Activated T-helper 1 cell treated with anti-CD3 and anti-CD28 coated beads, Interleukin-12 subunit alpha, Interleukin-12 subunit beta, Interleukin-2, Interleukin-4 antibody, amounts not matched to agents 30 ng/mL and 10 ng/mL and 1 ng/mL, durations not matched to agents 14 hours and 24 hours and 36 hours (primary cell): ENCODE measurements at regions of chr16 and their contacts with region 1.

Region 1: DNA sequence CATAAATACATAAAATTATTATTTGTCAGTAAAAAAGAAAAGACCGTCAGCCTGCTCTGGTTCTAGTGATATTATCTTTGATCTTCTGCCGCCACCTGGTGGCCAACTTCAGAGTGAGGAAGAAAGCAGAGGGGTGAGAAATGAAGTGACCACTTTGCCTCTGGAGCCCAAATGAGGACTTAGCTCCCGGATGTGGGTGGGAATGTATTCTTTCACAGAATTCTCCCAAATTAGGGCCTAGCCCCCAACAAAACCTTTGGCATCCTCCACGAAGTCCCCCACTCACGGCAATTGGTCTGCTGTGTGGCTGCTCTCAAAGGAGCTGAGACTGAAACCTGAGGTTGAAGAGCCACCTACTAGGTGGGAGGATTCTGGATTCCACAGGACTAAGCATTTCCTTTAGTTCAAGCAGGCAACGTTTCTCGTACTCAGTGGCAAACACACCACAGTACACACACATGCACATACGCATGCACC is 4.9 kb upstream of the ZNF267 start:
- DNase-seq: peak; percentile 74
- H3K4me3 Mint-ChIP-seq: peak overlapping the region; percentile 72
- H3K27ac Mint-ChIP-seq: peak overlapping the region; percentile 93
- H3K4me1 Mint-ChIP-seq: peaks cover 77% of the 10 kb centered on the region
- H3K27me3 Mint-ChIP-seq: peaks cover 3% of the 10 kb centered on the region

Region 2: DNA sequence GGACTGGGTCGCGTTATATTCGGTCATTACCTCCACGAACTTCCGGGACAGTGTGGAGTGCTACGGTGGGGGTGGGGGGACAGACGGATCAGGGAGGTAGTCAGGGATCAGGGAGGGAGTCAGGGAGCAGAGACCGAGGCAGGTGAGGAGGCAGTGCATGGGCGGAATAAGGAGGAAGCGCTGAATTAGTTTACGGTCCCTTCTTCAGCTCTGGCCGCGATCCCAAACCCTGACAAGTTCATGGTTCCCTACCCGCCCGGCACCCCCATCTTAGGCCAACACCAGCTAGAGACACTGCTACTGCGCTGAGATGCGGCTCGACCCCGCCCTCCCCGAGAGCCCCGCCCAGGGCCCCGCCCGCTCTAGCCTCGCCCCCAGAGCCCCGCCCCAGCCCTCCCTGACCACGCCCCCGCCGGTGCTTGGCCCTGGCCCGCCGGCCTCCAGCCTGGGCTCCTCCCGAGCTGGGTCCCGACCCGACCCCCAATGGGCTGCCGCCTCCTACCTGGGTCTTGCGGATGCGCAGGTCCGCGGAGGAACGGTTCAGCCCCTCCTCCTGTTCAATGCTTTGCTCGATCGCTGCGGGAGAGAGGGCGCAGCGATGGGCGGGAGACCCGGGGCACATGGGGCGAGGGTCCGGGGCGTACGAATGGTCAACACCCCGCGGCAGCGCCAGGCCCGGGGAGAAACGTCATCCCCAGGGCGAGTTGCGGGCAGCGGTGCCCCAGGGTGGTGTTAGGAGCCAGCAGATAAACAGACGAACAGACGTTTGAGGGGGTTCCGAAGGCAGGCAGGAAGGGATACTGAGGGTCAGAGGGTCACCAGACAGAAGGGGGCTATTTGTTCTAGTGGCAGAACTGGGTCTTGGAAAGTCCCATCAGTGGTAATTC is 871.5 kb before region 1 on chr16:
- intact Hi-C with region 1: loop called (anchors 2 kb)
- DNase-seq: peak; percentile 66
- H3K4me3 Mint-ChIP-seq: peak overlapping the region; percentile 74
- H3K27ac Mint-ChIP-seq: peak overlapping the region; percentile 44
- H3K4me1 Mint-ChIP-seq: peaks cover 11% of the 10 kb centered on the region
- H3K27me3 Mint-ChIP-seq: peaks cover 18% of the 10 kb centered on the region

Region 3: DNA sequence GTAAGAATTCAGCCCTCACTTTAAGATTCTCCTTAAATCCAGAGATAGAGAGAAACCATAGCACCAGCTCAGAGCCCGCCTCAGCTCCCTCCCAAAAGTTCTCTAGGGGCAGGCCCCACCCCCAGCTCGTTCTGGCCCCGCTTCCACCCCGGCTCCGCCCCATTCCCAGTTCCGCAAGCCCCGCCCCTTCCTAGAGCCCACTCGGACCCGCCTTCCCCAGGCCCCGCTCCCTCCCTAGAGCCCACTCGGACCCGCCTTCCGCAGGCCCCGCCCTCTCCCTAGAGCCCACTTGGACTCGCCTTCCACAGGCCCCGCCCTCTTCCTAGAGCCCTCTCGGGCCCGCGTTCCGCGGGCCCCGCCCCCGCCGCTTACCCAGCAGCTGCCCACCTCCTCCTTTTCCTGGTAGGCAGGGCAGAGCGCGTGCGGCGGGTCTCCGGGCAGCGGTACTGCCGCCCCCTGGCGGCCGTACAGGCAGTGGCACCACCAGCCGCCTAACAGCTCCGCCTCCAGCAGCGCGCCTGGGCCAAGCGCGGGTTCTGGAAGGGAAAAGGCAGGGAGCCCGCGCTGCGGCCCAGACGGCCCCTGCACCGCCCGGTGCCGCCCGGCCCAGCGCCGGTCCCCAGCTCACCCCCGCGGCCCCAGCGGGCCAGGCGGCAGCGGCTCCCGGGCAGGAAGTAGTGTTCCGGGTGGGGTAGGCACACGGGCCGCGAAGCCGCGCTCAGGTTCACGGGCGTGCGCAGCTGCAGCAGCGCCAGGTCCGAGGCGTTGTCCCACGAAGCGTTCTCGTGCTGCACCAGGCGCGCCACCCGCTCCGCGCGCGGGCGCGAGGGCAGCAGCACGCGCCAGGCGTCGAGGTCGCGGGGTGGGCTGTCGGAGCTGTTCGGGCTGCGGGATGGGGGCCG is 726.4 kb before region 1 on chr16:
- intact Hi-C with region 1: loop called (anchors 1 kb)
- DNase-seq: peak; percentile 98
- H3K4me3 Mint-ChIP-seq: peak overlapping the region; percentile 78
- H3K27ac Mint-ChIP-seq: peak overlapping the region; percentile 88
- H3K4me1 Mint-ChIP-seq: peaks cover 12% of the 10 kb centered on the region
- H3K27me3 Mint-ChIP-seq: peaks cover 13% of the 10 kb centered on the region

Region 4: DNA sequence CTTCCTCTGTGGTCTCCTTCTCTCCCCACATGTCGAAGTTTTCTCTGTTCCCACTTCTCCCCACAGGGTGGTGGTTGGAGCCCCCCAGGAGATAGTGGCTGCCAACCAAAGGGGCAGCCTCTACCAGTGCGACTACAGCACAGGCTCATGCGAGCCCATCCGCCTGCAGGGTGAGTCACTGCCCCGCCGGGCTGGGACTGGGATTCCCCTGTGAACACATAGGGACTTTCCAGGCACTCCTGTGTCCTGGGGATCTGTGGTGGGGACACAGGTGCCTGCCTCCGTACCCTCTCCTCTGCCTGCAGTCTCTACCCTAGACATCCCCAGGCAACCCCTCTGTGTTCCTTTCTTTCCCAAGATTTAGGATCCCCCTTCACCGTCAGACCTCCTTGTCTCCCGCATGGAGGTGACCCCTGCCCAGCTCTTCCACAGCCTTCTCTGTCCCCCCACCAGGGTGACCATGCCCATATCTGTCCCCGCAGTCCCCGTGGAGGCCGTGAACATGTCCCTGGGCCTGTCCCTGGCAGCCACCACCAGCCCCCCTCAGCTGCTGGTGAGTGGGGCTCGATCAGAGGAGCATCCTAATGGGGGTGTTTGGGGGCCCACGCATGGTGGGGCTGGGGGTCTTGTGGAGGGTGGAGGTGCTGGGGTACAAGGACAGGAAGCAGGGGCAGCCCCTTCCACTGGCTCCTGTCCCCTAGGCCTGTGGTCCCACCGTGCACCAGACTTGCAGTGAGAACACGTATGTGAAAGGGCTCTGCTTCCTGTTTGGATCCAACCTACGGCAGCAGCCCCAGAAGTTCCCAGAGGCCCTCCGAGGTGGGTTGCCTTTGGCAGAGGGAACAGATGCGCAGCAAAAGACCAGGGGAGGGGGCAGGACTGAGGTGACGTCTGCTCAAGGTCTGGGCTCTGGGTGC is 603.1 kb before region 1 on chr16:
- intact Hi-C with region 1: loop called (anchors 2 kb)
- DNase-seq: peak; percentile 78
- H3K4me3 Mint-ChIP-seq: peak overlapping the region; percentile 80
- H3K27ac Mint-ChIP-seq: peak overlapping the region; percentile 95
- H3K4me1 Mint-ChIP-seq: peaks cover 71% of the 10 kb centered on the region
- H3K27me3 Mint-ChIP-seq: no peaks in the 10 kb centered on the region

Region 5: DNA sequence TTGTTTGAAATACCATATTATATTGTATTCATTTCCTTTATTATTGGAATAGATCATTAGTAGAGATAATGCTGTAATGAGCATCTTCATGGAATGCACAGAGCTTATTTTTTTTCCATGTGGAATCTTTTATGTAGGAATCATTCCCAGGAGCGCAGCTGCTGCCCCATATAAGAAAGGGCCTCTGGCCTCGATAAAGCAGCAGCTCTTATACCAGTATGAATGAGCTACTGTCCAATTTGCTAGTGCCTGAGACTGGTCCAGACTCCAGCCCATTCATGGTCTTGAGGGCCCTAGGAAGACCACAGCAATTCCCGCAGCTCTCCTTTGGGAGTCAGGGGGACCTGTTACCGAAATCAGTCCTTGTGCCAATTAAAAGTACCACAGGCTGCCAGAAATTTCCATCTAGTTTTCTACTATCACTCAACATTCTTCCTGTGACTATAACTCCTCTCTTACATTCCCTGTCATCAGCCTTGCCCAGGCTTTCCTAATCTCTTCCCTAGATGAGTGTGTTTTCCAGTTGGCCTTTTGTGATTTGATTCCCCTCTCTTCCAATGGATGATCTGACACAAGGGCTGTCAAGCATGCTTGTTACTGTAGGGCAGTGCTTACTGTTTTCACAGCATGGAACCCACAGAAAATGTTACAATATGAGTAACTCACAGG is 428.1 kb before region 1 on chr16:
- intact Hi-C with region 1: loop called (anchors 5 kb)
- DNase-seq: no peak
- H3K4me3 Mint-ChIP-seq: no peak overlapping the region
- H3K27ac Mint-ChIP-seq: no peak overlapping the region
- H3K4me1 Mint-ChIP-seq: peaks cover 19% of the 10 kb centered on the region
- H3K27me3 Mint-ChIP-seq: peaks cover 9% of the 10 kb centered on the region

Region 6: DNA sequence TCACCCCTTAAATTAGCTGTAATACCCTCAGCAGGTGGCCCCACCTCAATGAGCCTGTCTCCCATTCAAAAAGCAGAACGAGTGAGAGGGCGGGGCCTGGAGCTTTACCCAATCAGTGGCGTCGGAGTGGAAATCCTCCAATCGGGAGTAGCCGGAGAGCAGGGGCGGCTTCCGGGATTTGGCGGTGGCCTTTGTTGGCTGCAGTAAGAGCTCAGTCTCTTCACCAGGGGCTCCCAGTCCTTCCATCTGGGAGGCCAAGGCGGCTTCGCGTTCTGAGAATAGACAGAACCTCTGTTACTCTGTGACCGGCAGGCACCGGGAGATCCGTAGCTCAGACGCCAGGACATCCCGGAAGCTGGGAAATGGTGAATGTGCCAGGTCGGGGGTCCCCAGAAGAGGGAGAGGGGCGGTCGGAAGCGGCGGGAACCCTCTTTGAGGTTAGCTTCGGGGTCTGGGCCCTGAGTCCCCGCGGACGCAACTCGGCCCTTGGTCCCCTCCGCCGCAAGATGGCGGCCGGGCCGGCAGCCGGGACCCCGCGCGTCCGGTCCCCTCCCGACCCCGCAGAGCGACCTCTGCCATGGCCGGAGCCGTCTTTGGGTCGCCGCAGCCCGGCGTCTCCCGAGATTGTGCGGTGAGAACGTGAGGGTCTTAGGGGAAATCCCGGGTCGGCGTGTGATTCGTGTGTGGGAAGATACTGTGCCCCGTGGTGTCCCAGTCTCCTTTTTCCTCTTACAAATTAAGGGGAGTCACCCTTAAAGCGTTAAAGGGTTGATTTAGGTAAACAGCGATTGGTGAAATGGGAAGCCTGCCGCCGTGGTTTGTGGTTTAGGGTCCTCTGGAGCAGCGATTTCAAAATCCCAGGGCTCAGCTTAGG is 155.4 kb before region 1 on chr16:
- intact Hi-C with region 1: loop called (anchors 1 kb)
- DNase-seq: peak; percentile 86
- H3K4me3 Mint-ChIP-seq: peak overlapping the region; percentile 99
- H3K27ac Mint-ChIP-seq: peak overlapping the region; percentile 99
- H3K4me1 Mint-ChIP-seq: peaks cover 31% of the 10 kb centered on the region
- H3K27me3 Mint-ChIP-seq: no peaks in the 10 kb centered on the region

Region 7: GRCh38 chr16:31764103-31764502 is 104.6 kb before region 1 on chr16:
- intact Hi-C with region 1: no loop called
- DNase-seq: no peak
- H3K4me3 Mint-ChIP-seq: no peak overlapping the region
- H3K27ac Mint-ChIP-seq: no peak overlapping the region
- H3K4me1 Mint-ChIP-seq: no peaks in the 10 kb centered on the region
- H3K27me3 Mint-ChIP-seq: no peaks in the 10 kb centered on the region